Colonic mucosa (tissue), 4 donors: ENCODE measurements at regions of chr15 and their contacts with region 1.

Region 1: DNA sequence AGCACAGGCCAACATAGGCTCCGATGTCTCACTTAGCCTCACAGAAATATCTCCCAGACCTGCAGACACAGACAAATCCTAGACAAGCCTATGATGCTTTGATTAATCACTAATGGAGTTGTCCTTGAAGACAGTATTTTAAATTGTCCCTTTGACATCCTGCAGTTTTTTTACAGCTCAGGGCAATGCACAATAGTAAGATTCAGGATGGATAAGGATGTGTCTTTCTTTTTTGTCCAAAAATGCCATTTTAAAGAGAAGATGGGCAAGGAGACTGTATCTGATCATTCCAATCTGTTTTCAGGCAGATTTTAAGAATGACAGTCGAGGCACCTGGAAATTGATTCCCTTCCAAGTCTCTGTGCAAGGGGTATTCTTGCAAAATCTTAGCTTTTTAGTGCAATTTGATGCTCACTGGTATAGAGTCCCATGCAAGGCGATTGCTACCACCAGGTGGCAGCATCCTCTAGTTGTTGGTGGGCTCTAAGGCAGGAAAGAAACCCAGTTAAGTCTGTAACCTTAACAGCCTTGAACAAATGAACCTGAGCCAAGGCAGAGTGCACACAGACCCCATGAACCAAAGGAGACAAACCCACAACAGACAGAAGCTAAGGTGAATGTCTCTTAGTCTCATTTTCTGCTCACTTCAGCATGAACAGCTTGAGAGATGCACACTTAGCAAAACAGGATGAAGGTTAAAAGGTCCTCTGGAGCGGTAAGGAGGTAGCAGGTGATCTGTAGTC is 51.2 kb upstream of the MINAR1 start:
- DNase-seq: peak; percentile 81
- H3K4me3 ChIP-seq: no peak overlapping the region
- H3K27ac ChIP-seq: no peak overlapping the region
- H3K4me1 ChIP-seq: no peaks in the 10 kb centered on the region
- H3K27me3 ChIP-seq: no peaks in the 10 kb centered on the region
- CTCF ChIP-seq: peak; percentile 86

Region 2: GRCh38 chr15:79195802-79196201 is 185.1 kb before region 1 on chr15:
- intact Hi-C with region 1: no loop called
- DNase-seq: no peak
- H3K4me3 ChIP-seq: no peak overlapping the region
- H3K27ac ChIP-seq: no peak overlapping the region
- H3K4me1 ChIP-seq: no peaks in the 10 kb centered on the region
- H3K27me3 ChIP-seq: no peaks in the 10 kb centered on the region
- CTCF ChIP-seq: no peak

Region 3: DNA sequence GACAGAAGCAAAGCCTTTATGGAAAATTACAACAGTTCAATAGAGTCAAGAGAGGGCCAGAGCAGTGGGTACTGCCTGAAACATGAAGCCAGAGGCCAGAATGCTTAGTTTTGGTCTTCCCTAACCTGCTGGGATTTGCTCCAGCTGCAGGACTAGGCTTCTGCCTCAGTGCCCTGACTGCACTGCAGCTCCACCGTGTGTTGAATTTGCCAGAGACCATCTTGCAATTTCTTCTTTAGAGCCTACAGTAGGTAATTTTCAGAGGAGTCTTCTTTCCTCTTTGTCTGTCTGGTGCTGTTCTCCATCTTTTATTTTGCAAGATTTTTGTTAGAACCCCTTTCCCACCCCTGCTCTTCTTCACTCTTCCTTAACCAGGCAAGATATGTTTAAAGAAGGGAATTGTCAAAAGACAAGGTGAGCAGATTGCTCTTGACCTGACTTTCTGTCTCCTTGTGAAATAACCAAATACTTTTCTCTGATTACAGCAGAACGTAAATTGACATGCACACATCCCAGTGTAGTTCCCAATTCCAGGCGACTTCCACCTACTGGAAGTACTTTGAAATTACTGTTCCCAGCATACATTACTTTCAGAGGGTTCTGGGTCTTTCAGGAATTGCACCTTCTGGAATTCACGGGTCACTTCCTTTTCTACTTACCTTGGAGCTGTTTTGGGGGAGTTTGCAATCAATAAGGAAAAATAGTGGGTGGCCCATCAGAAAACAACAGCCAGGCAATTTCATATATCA is 212.4 kb after region 1 on chr15:
- intact Hi-C with region 1: loop called (anchors 2 kb)
- DNase-seq: no peak
- H3K4me3 ChIP-seq: no peak overlapping the region
- H3K27ac ChIP-seq: no peak overlapping the region
- H3K4me1 ChIP-seq: no peaks in the 10 kb centered on the region
- H3K27me3 ChIP-seq: no peaks in the 10 kb centered on the region
- CTCF ChIP-seq: no peak

Region 4: DNA sequence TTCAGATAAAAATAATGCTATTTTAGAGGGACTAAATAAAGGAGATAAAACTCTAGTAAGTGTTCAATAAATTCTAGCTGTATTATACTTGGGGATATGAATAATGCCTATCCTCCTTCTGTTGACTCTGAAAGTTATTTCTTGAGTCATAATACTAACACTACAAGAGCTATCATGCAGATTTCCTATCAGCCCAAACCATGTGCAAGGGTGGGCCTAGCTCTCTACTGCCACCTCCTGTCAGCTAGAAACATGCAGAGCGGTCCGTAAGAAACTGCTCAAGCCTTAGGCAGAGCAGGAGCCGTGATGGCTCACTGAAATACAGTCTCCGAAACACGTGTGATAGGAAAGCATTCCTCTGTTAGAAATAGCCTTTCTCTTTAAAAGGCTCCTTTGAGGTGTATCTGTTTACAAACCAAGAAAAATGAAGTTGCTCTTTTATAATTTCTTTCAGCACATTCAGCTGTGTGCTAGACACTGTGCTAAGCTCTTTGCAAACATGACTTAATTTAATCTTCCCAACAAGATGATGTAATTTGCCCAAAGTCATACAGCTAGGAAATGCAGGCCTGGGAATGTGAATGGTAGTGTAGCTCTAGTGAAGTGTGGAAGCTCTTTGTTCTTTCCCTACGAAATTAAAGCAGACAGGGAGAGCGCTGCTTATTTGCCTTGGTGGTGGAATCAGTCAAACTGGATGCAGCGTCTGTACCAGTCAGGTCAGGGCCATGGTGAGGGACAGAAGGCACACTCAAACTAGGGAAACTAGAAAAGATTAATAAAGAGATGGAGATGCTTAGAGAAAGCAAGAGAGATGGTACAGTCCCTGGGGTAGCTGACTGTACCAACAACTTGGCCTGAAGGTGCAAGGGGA is 472.8 kb after region 1 on chr15:
- intact Hi-C with region 1: loop called (anchors 5 kb)
- DNase-seq: peak; percentile 54
- H3K4me3 ChIP-seq: no peak overlapping the region
- H3K27ac ChIP-seq: no peak overlapping the region
- H3K4me1 ChIP-seq: no peaks in the 10 kb centered on the region
- H3K27me3 ChIP-seq: no peaks in the 10 kb centered on the region
- CTCF ChIP-seq: peak; percentile 92

Region 5: GRCh38 chr15:80173022-80173759 is 792.3 kb after region 1 on chr15:
- intact Hi-C with region 1: loop called (anchors 10 kb)
- DNase-seq: peak; percentile 72
- H3K4me3 ChIP-seq: no peak overlapping the region
- H3K27ac ChIP-seq: no peak overlapping the region
- H3K4me1 ChIP-seq: no peaks in the 10 kb centered on the region
- H3K27me3 ChIP-seq: no peaks in the 10 kb centered on the region
- CTCF ChIP-seq: peak; percentile 67